Activated CD4-positive, alpha-beta T cell treated with anti-CD3 and anti-CD28 coated beads, Interleukin-2, amount 10 ng/mL, durations not matched to agents 7 days and 5 days (primary cell): ENCODE measurements at regions of chr6 and their contacts with region 1.

Region 1: DNA sequence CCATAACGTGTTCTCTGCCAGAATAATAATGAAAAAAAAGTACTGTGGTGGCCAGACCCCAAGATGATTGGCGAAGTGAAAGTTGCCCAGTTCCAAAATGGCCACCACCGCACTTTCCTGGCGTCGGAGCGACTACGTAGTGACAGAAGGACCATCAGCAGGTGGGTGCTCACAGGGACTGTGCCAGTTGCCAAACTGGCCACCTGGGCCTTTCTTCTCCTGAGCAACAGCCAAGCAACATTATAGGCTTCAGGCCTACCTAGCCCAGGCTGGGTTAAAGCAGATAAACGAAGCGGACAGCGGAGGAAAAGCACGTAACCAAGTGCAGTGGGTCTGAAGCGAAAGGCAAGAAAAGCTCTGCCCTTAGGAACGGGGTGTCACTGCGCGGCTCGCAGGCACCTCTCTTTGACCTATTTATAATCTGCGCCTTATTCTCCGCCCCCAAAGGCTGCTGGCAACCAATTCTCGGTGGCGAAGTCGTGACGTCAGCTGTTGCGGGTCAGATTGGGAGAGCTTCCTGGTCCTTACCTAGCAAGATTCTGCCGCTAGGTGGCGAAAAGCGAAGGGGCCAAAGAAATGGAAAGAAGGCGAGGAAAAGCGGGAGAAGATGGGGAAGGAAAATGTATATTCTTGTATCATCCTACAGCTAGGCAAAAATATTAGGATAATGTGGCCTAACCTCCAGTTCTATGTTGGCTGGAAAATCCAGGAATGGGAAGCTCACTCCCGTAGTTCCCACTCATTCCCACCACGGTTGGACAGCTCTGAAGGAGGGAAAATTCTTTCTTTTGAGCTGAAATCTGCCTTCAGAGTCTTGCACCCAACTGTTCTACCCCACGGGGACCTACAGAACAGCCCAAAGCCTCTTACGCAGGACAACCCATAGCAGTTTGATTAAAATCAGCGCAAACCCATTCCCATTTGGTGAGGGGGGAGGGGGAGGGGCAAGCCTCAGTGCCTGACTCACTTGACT is 6.9 kb upstream of the MOG start:
- DNase-seq: peak; percentile 100
- H3K4me3 Mint-ChIP-seq: peak overlapping the region; percentile 84
- H3K27ac Mint-ChIP-seq: peak overlapping the region; percentile 99
- H3K4me1 Mint-ChIP-seq: peaks cover 13% of the 10 kb centered on the region
- H3K27me3 Mint-ChIP-seq: peaks cover 6% of the 10 kb centered on the region

Region 2: DNA sequence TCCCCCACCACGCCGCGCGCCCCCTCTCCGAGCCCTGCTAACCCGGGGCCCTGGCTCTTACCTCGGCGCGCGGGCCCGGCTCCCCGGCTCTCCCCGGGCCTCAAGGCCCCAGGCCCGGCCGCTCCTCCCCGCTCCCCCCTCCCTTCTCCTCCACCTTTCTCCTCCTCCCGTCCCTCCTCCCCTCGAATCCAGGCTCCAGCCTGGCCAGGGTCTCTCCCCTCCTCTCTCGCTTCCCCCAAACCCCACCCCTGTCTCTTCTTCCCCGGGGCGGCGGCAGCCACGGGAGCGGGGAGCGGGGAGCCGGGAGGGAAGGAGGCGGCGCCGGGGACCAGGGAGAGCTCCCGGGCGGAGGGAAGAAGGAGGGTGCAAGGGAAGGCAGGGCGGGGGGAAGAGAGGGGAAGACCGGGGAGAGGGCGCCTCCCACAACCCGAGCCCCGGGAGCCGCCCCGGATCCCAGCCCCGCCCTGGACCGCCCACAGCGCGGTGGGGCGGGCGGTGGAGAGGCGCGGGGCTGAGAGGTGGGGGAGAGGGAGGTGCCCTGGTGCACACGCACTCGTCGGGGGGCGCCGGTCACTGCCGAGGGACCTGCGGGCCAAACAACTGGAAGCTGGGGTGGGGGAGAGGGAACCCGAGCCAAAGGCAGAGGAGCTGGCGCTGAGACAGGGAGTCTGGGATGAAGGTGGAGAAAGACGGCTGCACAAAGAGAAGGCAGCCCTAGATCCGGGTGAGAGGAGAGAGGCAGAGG is 17.0 kb before region 1 on chr6 and contains the start of gene GABBR1:
- CTCF ChIA-PET with region 1: interaction called, 20 read pairs
- POLR2A ChIA-PET with region 1: no interaction called
- DNase-seq: peak; percentile 82
- H3K4me3 Mint-ChIP-seq: peak within 1 kb of the TSS; percentile 70
- H3K27ac Mint-ChIP-seq: peak within 1 kb of the TSS; percentile 84
- H3K4me1 Mint-ChIP-seq: peaks cover 51% of the 10 kb centered on the region
- H3K27me3 Mint-ChIP-seq: peaks cover 20% of the 10 kb centered on the region
- total RNA-seq, gene GABBR1: 48.5 to 50.5 TPM

Region 3: DNA sequence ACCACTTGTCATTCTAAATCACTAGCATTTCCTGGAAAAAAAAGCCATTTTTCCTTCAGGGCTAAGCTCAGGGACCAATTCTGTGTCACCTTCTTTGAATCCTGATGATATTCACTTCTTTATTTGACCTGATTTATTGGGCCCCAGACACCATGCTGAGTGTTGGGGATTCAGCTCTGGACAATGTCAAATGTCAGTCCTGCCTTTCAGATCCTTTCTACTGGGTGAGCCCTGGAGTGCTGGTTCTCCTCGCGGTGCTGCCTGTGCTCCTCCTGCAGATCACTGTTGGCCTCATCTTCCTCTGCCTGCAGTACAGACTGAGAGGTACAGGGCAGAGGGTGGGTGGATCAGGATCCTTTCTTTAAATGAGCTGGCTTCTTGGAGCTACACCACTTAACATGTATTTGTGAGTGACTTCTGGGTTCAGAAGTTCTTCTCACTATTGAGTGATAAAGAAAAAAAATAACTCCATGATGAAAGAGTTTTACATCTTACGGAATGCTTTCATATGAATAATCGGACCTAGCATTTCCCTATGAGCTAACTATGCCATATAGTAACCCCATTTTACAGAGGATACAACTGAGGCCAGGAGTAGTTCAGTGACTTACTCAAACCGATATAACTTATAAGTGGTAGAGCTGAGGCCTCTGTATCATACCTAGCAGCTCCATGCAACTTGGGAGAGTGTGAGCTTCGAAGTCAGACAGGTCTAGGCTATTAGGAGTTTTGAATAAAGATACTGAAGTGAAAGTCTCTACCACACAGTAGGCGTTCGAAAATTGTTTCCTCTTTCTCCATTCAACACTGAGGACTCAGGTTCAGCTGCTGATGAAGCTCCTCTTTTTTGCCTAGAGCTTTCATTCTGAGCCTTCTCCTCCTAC is 16.2 kb after region 1 on chr6:
- CTCF ChIA-PET with region 1: interaction called, 28 read pairs
- POLR2A ChIA-PET with region 1: no interaction called
- DNase-seq: no peak
- H3K4me3 Mint-ChIP-seq: no peak overlapping the region
- H3K27ac Mint-ChIP-seq: no peak overlapping the region
- H3K4me1 Mint-ChIP-seq: no peaks in the 10 kb centered on the region
- H3K27me3 Mint-ChIP-seq: peaks cover 41% of the 10 kb centered on the region

Region 4: GRCh38 chr6:29673161-29673560 is 23.2 kb after region 1 on chr6:
- CTCF ChIA-PET with region 1: interaction called, 17 read pairs
- POLR2A ChIA-PET with region 1: no interaction called
- DNase-seq: no peak
- H3K4me3 Mint-ChIP-seq: no peak overlapping the region
- H3K27ac Mint-ChIP-seq: no peak overlapping the region
- H3K4me1 Mint-ChIP-seq: peaks cover 11% of the 10 kb centered on the region
- H3K27me3 Mint-ChIP-seq: peaks cover 11% of the 10 kb centered on the region

Region 5: DNA sequence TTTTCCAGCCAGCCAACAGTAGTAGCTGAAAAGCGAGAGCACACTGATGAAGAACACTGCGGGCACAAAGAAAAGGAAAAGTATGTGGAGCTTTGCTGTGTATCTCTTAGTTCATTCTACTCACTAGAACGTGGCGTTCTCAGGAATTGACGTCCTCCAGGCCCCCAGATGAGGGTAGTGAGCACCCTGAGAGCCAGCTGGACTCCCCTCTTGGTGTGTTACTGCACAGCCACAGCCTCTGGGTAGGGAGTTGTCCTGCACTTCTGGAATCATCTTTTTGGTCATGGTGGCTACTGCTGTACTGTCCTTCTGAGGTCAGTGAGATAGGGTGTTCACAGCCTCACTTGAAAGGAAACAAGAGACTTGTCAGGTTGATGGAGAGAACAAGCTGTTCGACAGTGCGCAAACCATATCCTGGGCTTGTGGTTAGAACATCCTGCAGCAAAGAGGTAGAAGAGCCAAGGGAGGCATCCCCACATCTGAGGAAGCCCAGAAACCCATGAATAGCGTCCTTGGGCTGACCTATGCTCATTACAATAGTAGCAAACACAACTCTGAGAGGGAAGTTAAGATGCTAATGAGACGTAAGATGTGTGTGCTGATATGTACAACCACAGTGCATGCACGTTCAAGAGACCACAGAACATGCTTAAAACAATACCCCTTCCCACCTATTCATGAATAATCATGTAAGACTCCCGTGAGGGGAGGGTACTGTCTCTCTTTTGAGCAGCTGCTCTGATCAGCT is 58.6 kb after region 1 on chr6:
- CTCF ChIA-PET with region 1: interaction called, 13 read pairs
- POLR2A ChIA-PET with region 1: no interaction called
- DNase-seq: peak; percentile 94
- H3K4me3 Mint-ChIP-seq: peak overlapping the region; percentile 74
- H3K27ac Mint-ChIP-seq: peak overlapping the region; percentile 95
- H3K4me1 Mint-ChIP-seq: peaks cover 61% of the 10 kb centered on the region
- H3K27me3 Mint-ChIP-seq: peaks cover 10% of the 10 kb centered on the region